ENCODE measurements at regions of chr1 and their contacts with region 1.

Region 1: GRCh38 chr1:156160743-156161171 is 7.4 kb downstream of the SEMA4A start:
- DNase-seq: no peak
- ATAC-seq: no peak
- H3K4me3 ChIP-seq: no peak overlapping the region
- H3K27ac ChIP-seq: no peak overlapping the region
- H3K4me1 ChIP-seq: no peaks in the 10 kb centered on the region; the same call in 1 of the 2 replicates
- H3K27me3 ChIP-seq: no peaks in the 10 kb centered on the region
- CTCF ChIP-seq: no peak

Region 2: DNA sequence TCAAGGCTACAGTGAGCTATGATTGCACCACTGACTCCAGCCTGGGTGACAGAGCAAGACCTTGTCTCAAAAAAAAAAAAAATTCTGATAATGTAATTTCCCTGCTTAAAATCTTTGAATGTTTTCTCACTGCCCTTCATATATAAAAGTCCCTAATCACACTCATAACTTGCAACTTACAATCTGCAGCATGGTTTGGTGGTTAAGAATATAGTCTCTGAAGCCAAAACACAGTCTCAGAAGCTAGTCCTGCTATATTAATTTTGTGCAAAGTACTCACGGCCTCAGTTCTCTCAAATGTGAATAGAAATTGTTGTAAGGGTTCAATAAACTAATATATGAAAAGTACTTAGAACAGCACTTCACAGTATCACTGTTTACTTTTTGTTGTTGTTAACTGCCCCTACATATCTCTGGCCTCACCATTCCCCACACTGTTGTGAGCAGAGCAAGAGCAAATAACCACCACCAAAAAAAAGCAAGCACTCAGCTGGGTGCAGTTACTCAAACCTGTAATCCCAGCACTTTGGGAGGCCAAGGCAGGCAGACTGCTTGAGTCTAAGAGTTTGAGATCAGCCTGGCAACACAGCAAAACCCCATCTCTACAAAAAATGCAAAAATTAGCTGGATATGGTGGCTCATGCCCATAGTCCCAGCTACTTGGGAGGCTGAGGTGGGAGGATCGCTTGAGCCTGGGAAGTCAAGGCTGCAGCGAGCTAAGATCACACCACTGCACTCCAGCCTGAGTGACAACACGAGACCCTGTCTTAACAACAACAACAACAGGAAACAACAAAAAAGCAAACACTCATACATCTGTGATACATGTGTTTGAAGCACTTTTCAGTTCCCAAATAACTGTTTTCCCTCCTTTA is 620.5 kb before region 1 on chr1:
- CTCF ChIA-PET with region 1: no interaction called
- POLR2A ChIA-PET with region 1: no interaction called
- in situ Hi-C with region 1: no loop called
- intact Hi-C with region 1: no loop called
- DNase-seq: no peak
- ATAC-seq: no peak
- H3K4me3 ChIP-seq: no peak overlapping the region
- H3K27ac ChIP-seq: no peak overlapping the region
- H3K4me1 ChIP-seq: peaks cover 19% of the 10 kb centered on the region
- H3K27me3 ChIP-seq: no peaks in the 10 kb centered on the region
- CTCF ChIP-seq: no peak

Region 3: DNA sequence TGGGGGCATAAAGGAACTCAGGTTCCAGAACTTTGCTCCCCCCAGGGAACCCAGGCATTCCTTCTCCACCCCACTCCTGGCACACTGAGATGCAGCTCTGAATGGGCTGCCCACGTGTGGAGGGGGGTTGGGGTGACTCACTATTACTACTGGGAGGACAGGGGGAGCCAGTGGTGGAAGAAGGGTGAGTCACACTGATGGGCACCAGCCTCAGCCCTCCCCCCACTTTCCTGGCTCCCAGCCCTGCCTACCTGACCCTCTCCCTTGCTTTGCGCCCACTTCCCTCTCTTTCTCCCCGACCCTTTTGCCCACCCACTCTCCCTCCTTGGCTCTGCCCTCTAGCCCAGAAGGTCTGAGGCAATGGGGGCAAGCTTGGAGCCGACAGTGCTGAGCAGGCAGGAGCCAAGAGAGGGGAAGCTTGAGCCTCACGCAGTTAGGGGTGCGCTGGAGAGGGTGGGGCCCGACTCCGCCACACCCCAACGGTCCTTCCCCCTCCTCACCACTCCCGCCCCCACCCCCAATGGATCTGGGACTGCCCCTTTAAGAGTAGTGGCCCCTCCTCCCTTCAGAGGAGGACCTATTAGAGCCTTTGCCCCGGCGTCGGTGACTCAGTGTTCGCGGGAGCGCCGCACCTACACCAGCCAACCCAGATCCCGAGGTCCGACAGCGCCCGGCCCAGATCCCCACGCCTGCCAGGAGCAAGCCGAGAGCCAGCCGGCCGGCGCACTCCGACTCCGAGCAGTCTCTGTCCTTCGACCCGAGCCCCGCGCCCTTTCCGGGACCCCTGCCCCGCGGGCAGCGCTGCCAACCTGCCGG is 46.4 kb before region 1 on chr1 and contains the start of gene LMNA:
- CTCF ChIA-PET with region 1: no interaction called
- POLR2A ChIA-PET with region 1: no interaction called
- in situ Hi-C with region 1: no loop called
- intact Hi-C with region 1: loop called (anchors 2 kb)
- DNase-seq: peak; percentile 82
- ATAC-seq: peak; percentile 84
- H3K4me3 ChIP-seq: peak within 1 kb of the TSS; percentile 78 to 99
- H3K27ac ChIP-seq: peak within 1 kb of the TSS; percentile 96
- H3K4me1 ChIP-seq: peaks cover 41% of the 10 kb centered on the region
- H3K27me3 ChIP-seq: no peaks in the 10 kb centered on the region
- CTCF ChIP-seq: no peak
- total RNA-seq, gene LMNA: 691 TPM

Region 4: GRCh38 chr1:156193488-156194299 is 32.9 kb after region 1 on chr1 and contains the start of gene SLC25A44:
- CTCF ChIA-PET with region 1: no interaction called
- POLR2A ChIA-PET with region 1: interaction called, 12 read pairs
- in situ Hi-C with region 1: no loop called
- intact Hi-C with region 1: no loop called
- DNase-seq: peak; percentile 100
- ATAC-seq: peak; percentile 99
- H3K4me3 ChIP-seq: peak within 1 kb of the TSS; percentile 99
- H3K27ac ChIP-seq: peak within 1 kb of the TSS; percentile 88
- H3K4me1 ChIP-seq: peaks cover 10% of the 10 kb centered on the region; the same call in 1 of the 2 replicates
- H3K27me3 ChIP-seq: no peaks in the 10 kb centered on the region
- CTCF ChIP-seq: no peak
- total RNA-seq, gene SLC25A44: 33.0 TPM